CD8-positive, alpha-beta T cell (primary cell): ENCODE measurements at regions of chrX and their contacts with region 1.

Region 1: GRCh38 chrX:23907498-23908218 is at the starts of genes APOO and CXorf58:
- DNase-seq: peak; percentile 79 to 96 (median 88)
- ATAC-seq: peak; percentile 90
- H3K4me3 ChIP-seq: peak within 1 kb of the TSS; percentile 59 to 71
- H3K4me3 Mint-ChIP-seq: peak within 1 kb of the TSS; percentile 82
- H3K27ac ChIP-seq: peak within 1 kb of the TSS; percentile 89 to 91
- H3K27ac Mint-ChIP-seq: peak within 1 kb of the TSS; percentile 91
- H3K4me1 ChIP-seq: peaks cover 13% of the 10 kb centered on the region
- H3K4me1 Mint-ChIP-seq: peaks cover 16% of the 10 kb centered on the region
- H3K27me3 ChIP-seq: no peaks in the 10 kb centered on the region
- H3K27me3 Mint-ChIP-seq: no peaks in the 10 kb centered on the region
- CTCF ChIP-seq: peak; percentile 41
- total RNA-seq, gene APOO: 7.6 to 8.2 TPM
- total RNA-seq, gene CXorf58: not detected

Region 2: GRCh38 chrX:23667239-23668177 is 240.2 kb before region 1 on chrX and contains the start of gene PRDX4:
- CTCF ChIA-PET with region 1: interaction called, 5 read pairs
- POLR2A ChIA-PET with region 1: interaction called, 4 read pairs
- intact Hi-C with region 1: loop called (anchors 1 kb)
- DNase-seq: peak; percentile 37 to 84 (median 64)
- ATAC-seq: peak; percentile 85
- H3K4me3 ChIP-seq: peak within 1 kb of the TSS; percentile 62 to 67
- H3K4me3 Mint-ChIP-seq: peak within 1 kb of the TSS; percentile 92
- H3K27ac ChIP-seq: peak within 1 kb of the TSS; percentile 66 to 68
- H3K27ac Mint-ChIP-seq: peak within 1 kb of the TSS; percentile 86
- H3K4me1 ChIP-seq: peaks cover 11% of the 10 kb centered on the region
- H3K4me1 Mint-ChIP-seq: peaks cover 25% of the 10 kb centered on the region
- H3K27me3 ChIP-seq: no peaks in the 10 kb centered on the region
- H3K27me3 Mint-ChIP-seq: no peaks in the 10 kb centered on the region
- CTCF ChIP-seq: no peak
- total RNA-seq, gene PRDX4: 2.2 to 3.6 TPM

Region 3: DNA sequence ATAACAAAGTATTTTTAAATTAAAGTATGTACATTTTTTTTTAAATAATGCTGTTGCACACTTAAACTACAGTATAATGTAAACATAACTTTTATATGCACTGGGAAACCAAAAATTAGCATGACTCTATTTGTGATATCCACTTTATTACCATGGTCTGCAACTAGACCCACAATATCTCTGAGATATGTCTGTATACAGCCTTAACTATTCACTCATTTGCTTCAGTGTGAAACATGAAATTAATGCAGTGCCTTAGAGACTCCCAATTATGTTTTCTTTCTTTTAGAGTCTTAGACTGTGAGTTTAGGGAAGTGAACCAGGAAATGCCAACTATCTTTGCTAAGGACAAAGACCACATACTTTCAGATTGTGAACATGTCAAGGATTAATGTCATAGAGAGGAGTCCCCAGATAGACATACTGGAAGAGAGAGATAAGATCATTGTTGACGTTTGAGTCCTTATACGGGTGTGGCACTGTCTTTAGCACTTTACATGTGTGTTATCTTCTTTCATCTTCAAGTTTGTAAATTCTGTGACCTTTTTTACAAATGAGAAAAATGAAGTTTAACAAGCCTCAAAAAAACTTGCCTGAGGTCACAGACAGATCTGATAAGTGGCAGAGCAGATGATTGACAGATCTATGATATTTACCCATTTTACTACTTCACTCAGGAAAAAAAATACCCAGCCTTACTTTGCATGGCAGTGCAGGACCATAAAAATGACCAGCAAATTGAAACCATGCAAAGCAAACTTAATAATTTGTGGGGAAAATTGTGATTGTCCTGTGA is 23.4 kb after region 1 on chrX:
- CTCF ChIA-PET with region 1: no interaction called
- POLR2A ChIA-PET with region 1: no interaction called
- intact Hi-C with region 1: loop called in 1 of 2 experiments (anchors 2 kb)
- DNase-seq: peak in 2 of 9 experiments; percentile 16 to 52
- ATAC-seq: peak; percentile 84
- H3K4me3 ChIP-seq: no peak overlapping the region
- H3K4me3 Mint-ChIP-seq: peak overlapping the region; percentile 18
- H3K27ac ChIP-seq: peak overlapping the region in 1 of 2 experiments; percentile 50
- H3K27ac Mint-ChIP-seq: peak overlapping the region; percentile 84
- H3K4me1 ChIP-seq: peaks cover 8% of the 10 kb centered on the region
- H3K4me1 Mint-ChIP-seq: peaks cover 18% of the 10 kb centered on the region
- H3K27me3 ChIP-seq: no peaks in the 10 kb centered on the region
- H3K27me3 Mint-ChIP-seq: no peaks in the 10 kb centered on the region
- CTCF ChIP-seq: no peak

Region 4: GRCh38 chrX:23959781-23960180 is 52.1 kb after region 1 on chrX:
- CTCF ChIA-PET with region 1: interaction called, 7 read pairs
- POLR2A ChIA-PET with region 1: no interaction called
- intact Hi-C with region 1: loop called (anchors 2 to 5 kb)
- DNase-seq: peak in 4 of 9 experiments; percentile 16 to 54 (median 22)
- ATAC-seq: peak; percentile 77
- H3K4me3 ChIP-seq: no peak overlapping the region
- H3K4me3 Mint-ChIP-seq: peak overlapping the region; percentile 31
- H3K27ac ChIP-seq: no peak overlapping the region
- H3K27ac Mint-ChIP-seq: peak overlapping the region; percentile 81
- H3K4me1 ChIP-seq: peaks cover 15% of the 10 kb centered on the region
- H3K4me1 Mint-ChIP-seq: peaks cover 14% of the 10 kb centered on the region
- H3K27me3 ChIP-seq: no peaks in the 10 kb centered on the region
- H3K27me3 Mint-ChIP-seq: no peaks in the 10 kb centered on the region
- CTCF ChIP-seq: no peak

Region 5: DNA sequence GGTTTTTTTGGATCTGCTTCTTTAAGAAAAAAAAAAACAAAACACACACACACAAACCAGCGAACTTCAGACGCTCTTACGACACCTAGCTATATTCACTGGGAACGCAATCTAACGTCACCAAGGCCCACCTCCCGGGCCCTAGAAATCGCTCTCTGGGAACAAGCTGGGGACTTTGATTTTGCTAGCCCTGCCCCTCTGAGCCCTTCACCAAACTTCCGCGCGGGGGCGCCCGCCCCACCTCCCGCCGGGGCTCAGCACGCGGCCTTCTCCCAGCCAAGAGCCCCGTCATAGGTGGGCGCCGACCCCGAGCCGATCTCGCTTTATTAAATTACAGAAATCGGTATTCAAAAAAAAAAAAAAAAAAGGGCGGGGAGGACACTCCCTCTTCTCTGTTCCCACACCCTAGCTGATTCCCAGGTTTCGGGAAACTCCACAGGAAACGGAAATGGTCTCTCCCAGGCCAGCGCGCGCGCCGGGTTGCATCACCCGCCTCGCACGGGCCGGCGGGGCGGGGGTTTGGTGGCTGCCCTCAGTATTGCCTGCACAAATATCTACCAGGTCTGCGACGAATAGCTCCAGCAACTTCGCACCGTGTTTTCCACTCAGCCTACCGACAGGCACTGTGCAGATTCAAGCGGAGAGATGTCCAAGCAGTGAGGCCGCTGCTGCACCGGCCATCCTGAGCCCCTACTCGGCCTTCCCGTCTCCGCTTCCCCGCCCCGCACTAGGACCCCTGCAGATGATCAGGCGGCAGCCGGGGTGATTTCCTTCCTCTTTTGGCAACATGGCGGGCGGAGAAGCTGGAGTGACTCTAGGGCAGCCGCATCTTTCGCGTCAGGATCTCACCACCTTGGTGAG is 146.8 kb after region 1 on chrX and contains the start of gene EIF2S3:
- CTCF ChIA-PET with region 1: interaction called, 26 read pairs
- POLR2A ChIA-PET with region 1: interaction called, 22 read pairs
- intact Hi-C with region 1: loop called (anchors 1 kb)
- DNase-seq: peak; percentile 69 to 94 (median 86)
- ATAC-seq: peak; percentile 82
- H3K4me3 ChIP-seq: peak within 1 kb of the TSS; percentile 87 to 92
- H3K4me3 Mint-ChIP-seq: no peak within 1 kb of the TSS
- H3K27ac ChIP-seq: peak within 1 kb of the TSS; percentile 91 to 96
- H3K27ac Mint-ChIP-seq: peak within 1 kb of the TSS; percentile 99
- H3K4me1 ChIP-seq: peaks cover 3% of the 10 kb centered on the region
- H3K4me1 Mint-ChIP-seq: peaks cover 6% of the 10 kb centered on the region
- H3K27me3 ChIP-seq: no peaks in the 10 kb centered on the region
- H3K27me3 Mint-ChIP-seq: no peaks in the 10 kb centered on the region
- CTCF ChIP-seq: no peak
- total RNA-seq, gene EIF2S3: 180 to 184 TPM

Region 6: GRCh38 chrX:24241822-24242648 is 334.4 kb after region 1 on chrX:
- CTCF ChIA-PET with region 1: no interaction called
- POLR2A ChIA-PET with region 1: no interaction called
- intact Hi-C with region 1: loop called (anchors 2 to 10 kb)
- DNase-seq: peak in 2 of 9 experiments; percentile 37 to 53
- ATAC-seq: no peak
- H3K4me3 ChIP-seq: no peak overlapping the region
- H3K4me3 Mint-ChIP-seq: no peak overlapping the region
- H3K27ac ChIP-seq: no peak overlapping the region
- H3K27ac Mint-ChIP-seq: no peak overlapping the region
- H3K4me1 ChIP-seq: no peaks in the 10 kb centered on the region
- H3K4me1 Mint-ChIP-seq: no peaks in the 10 kb centered on the region
- H3K27me3 ChIP-seq: no peaks in the 10 kb centered on the region
- H3K27me3 Mint-ChIP-seq: no peaks in the 10 kb centered on the region
- CTCF ChIP-seq: no peak

Region 7: DNA sequence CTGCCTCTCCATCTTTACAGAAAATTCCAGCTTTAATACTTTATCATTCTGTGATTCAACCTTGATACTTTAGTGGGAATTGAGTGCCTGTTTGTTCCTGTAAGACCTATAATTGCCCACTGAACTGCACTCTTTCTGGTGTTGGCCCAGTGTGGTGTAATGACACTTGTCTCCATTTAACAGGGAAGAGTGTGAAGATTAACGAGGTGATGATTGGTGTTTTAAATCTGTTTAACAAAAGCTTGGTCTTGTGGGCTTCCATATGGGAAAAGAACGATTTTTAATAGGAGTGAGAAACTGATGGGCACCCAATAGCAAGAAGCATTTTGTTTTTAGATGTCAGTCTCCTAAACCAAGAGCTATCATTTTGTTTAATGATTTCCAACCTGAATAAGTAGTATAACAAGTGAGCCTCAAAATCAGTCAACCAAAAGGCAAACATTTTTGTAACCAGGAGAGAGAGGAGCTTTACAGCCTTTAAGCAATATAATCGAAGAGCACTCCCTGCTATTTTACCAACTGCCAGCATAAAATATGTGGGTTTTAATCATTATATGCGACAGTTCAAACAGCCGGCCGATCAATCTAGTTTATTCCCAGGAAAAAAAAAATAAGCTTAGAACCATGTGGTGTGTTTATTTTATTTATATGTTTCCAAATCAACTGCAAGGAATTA is 503.0 kb after region 1 on chrX:
- CTCF ChIA-PET with region 1: no interaction called
- POLR2A ChIA-PET with region 1: no interaction called
- intact Hi-C with region 1: no loop called
- DNase-seq: no peak
- ATAC-seq: no peak
- H3K4me3 ChIP-seq: no peak overlapping the region
- H3K4me3 Mint-ChIP-seq: no peak overlapping the region
- H3K27ac ChIP-seq: no peak overlapping the region
- H3K27ac Mint-ChIP-seq: no peak overlapping the region
- H3K4me1 ChIP-seq: no peaks in the 10 kb centered on the region
- H3K4me1 Mint-ChIP-seq: no peaks in the 10 kb centered on the region
- H3K27me3 ChIP-seq: no peaks in the 10 kb centered on the region
- H3K27me3 Mint-ChIP-seq: no peaks in the 10 kb centered on the region
- CTCF ChIP-seq: no peak